HEK293 (cell line): ENCODE measurements at regions of chr7 and their contacts with region 1.

Region 1: DNA sequence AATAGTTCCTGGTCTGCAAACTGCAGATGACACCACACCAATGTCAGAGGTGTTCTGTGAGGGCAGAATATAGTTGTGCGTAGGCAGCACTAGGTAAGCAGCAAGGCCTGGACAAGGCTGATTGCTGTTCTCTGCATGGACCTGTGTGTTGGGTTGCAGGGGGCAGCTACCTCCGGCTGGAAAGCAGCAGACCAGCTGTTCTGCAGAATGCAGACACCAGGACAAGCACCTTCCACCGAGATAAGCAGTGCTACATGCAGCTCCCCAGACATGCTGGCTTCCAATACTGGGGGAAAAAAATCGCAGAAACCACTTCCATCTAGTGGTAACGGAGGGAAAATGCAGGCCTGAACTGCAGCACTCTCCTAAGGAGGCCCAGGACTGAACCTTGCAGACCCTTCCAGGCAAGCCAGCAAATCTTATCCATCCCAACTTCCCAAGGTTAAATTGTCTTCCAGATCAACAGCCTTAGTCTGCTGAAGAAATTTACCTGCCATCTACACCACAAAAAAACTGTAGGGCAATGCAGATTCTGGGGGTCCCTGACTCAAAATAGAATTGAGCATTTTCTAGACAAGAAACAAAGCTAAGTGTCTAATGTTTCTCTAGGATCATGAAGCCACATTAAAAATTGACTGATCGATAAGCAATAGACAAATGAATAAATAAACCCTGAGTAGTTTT is 50.5 kb upstream of the COBL start:
- H3K4me3 ChIP-seq: no peak overlapping the region
- H3K27ac ChIP-seq: no peak overlapping the region
- H3K4me1 ChIP-seq: no peaks in the 10 kb centered on the region
- CTCF ChIP-seq: peak; percentile 62

Region 2: GRCh38 chr7:51224811-51225612 is 142.1 kb before region 1 on chr7:
- CTCF ChIA-PET with region 1: interaction called, 39 read pairs
- POLR2A ChIA-PET with region 1: no interaction called
- H3K4me3 ChIP-seq: no peak overlapping the region
- H3K27ac ChIP-seq: no peak overlapping the region
- H3K4me1 ChIP-seq: no peaks in the 10 kb centered on the region; the same call in 1 of the 2 replicates
- CTCF ChIP-seq: no peak

Region 3: GRCh38 chr7:51350200-51350921 is 16.7 kb before region 1 on chr7:
- CTCF ChIA-PET with region 1: interaction called, 21 read pairs
- POLR2A ChIA-PET with region 1: interaction called, 3 read pairs
- H3K4me3 ChIP-seq: no peak overlapping the region
- H3K27ac ChIP-seq: peak overlapping the region; percentile 12
- H3K4me1 ChIP-seq: peaks cover 11% of the 10 kb centered on the region
- CTCF ChIP-seq: no peak